ENCODE measurements at regions of chr11 and their contacts with region 1.

Region 1: DNA sequence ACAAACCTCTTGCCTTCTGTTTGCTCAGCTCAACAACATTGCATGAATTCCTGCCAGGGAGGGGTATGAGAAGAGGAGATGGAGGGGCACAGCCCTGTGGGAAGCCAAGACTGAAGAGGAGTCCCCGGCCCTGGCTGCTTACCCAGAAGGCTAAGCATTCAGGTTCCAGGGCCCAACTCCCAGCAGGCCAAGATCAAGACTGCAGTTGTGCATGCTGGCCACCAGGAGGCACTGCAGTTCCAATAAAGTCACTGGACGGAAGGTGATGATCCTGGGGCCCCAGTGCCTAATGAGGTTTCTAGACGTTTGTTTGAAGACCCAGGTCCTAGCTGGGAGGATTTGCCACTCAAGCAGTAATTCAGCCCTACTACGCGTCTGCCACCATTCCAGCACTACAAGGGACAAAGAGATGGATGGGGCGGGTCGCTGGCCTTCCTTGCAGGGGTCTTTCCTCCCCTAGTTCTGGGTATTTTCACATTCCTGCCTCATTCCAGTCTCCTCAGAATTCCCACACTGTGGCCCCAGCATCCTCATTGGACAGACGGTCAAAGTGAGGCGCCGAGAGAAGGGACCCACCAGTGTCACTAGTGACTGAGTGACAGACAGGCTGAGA is 23.6 kb downstream of the ALX4 start:
- DNase-seq: no peak
- H3K4me3 ChIP-seq: no peak overlapping the region
- H3K27me3 ChIP-seq: no peaks in the 10 kb centered on the region
- CTCF ChIP-seq: peak; percentile 94

Region 2: DNA sequence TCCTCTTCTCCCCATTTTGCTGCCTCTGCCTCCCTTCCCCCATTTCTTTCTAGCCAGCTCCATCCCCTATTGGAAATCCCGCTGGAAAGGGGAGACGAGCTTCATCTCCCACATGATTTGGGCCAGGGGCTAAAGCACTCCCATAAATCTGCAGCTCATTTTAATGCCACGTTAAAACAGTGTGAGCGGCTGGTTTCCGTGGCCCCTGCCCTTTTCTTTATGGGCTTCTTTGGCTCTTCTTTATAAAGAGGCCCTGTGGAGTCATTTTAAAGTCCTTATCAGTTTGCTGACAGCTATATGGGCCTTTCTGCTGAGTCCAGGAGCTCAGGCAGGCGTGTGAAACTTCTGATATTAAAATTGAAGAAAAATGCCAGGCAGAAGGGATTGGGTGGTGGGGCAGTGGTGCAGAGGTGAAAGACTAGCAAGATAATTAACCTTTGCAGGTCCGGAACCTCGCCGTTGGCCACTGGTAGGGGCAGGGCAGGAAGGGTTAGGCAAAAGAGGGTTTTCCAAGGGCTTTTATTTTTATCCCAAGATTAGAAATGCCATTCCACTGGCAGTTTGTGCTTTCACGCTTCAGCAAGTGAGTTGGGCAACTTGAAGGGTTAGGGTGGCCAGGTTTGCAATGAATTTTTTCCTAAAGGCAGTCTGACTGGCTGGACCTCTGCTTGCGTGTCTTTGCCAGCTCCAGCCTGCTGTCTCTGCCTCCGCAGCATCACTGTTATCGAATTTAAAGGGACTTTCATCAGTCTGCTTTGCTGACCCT is 146.6 kb before region 1 on chr11:
- CTCF ChIA-PET with region 1: interaction called, 27 read pairs
- POLR2A ChIA-PET with region 1: no interaction called
- DNase-seq: no peak
- H3K4me3 ChIP-seq: no peak overlapping the region
- H3K27me3 ChIP-seq: no peaks in the 10 kb centered on the region
- CTCF ChIP-seq: no peak

Region 3: DNA sequence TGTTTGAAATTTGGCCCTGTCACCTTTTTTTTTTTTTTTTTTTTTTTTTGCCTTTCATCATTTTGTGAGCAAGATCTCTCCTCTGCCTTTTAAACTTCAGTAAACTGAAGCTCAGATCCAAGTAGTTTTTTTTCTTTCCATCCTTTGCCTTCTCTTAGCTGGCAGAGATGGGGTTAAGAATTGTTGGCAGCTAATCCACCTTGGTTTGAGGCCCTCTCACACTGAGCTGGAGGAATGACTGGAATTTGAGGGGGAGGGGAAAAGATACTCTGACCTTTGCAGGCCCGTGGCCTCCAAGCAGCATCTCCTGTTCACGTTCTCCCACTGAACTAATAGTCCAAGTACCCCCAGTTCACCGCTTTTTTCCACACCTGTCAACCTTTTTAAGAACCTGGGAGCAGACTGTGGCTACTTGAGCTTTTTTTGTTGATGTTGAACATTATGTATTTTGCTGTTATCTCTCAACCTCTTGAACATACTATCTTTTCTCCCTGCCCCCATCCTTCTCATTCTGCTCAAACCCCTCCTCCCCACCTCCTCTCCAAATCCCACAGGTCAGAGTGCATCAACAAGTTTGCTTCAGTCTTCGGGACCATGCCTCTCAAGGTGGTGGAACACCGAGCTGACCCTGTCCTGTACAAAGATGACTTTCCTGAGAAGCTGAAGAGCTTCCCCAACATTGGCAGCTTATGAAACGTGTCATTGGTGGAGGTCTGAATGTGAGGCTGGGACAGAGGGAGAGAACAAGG is 42.6 kb before region 1 on chr11:
- CTCF ChIA-PET with region 1: interaction called, 14 read pairs
- POLR2A ChIA-PET with region 1: no interaction called
- DNase-seq: no peak
- H3K4me3 ChIP-seq: no peak overlapping the region
- H3K27me3 ChIP-seq: no peaks in the 10 kb centered on the region
- CTCF ChIP-seq: no peak

Region 4: GRCh38 chr11:44300881-44301855 is 14.8 kb after region 1 on chr11:
- CTCF ChIA-PET with region 1: interaction called, 13 read pairs
- POLR2A ChIA-PET with region 1: no interaction called
- DNase-seq: peak; percentile 58
- H3K4me3 ChIP-seq: no peak overlapping the region
- H3K27me3 ChIP-seq: peaks cover 1% of the 10 kb centered on the region
- CTCF ChIP-seq: no peak

Region 5: GRCh38 chr11:44483919-44484610 is 197.7 kb after region 1 on chr11:
- CTCF ChIA-PET with region 1: interaction called, 22 read pairs
- POLR2A ChIA-PET with region 1: no interaction called
- DNase-seq: no peak
- H3K4me3 ChIP-seq: no peak overlapping the region
- H3K27me3 ChIP-seq: no peaks in the 10 kb centered on the region
- CTCF ChIP-seq: peak; percentile 56